ENCODE measurements at regions of chr2 and their contacts with region 1.

Region 1: GRCh38 chr2:113361051-113361450 is 76.4 kb upstream of the ZNG1B start:
- DNase-seq: no peak
- ATAC-seq: no peak
- H3K4me3 Mint-ChIP-seq: no peak overlapping the region
- H3K27ac Mint-ChIP-seq: no peak overlapping the region
- H3K4me1 Mint-ChIP-seq: peaks cover 22% of the 10 kb centered on the region
- H3K27me3 Mint-ChIP-seq: no peaks in the 10 kb centered on the region

Region 2: GRCh38 chr2:113277474-113278072 is 83.5 kb before region 1 on chr2:
- CTCF ChIA-PET with region 1: no interaction called
- POLR2A ChIA-PET with region 1: no interaction called
- intact Hi-C with region 1: no loop called
- DNase-seq: no peak
- ATAC-seq: no peak
- H3K4me3 Mint-ChIP-seq: no peak overlapping the region
- H3K27ac Mint-ChIP-seq: no peak overlapping the region
- H3K4me1 Mint-ChIP-seq: peaks cover 21% of the 10 kb centered on the region
- H3K27me3 Mint-ChIP-seq: peaks cover 54% of the 10 kb centered on the region

Region 3: DNA sequence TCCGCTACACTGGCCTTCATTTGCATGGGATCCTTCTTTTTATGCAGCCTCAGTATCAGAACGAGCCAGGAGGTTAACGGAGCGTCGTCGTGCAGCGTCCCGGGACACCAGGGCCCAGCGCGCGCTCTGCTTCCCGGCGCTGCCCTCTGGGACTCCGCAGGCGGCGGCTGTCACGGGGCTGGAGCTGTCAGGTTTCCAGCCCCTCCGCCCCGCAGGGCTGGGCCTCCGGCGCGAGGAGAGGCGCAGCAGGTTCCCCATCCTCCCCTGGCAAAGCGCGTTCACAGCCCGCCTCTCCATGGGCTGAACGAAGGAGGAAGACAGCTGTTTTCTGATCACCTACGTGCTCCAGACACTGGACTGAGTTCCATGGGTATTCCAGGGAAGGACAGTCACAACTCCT is 69.9 kb before region 1 on chr2:
- CTCF ChIA-PET with region 1: no interaction called
- POLR2A ChIA-PET with region 1: no interaction called
- intact Hi-C with region 1: loop called in 1 of 2 experiments (anchors 10 kb)
- DNase-seq: no peak
- ATAC-seq: no peak
- H3K4me3 Mint-ChIP-seq: no peak overlapping the region
- H3K27ac Mint-ChIP-seq: no peak overlapping the region
- H3K4me1 Mint-ChIP-seq: no peaks in the 10 kb centered on the region
- H3K27me3 Mint-ChIP-seq: peaks cover 14% of the 10 kb centered on the region

Region 4: GRCh38 chr2:113342650-113343049 is 18.4 kb before region 1 on chr2:
- CTCF ChIA-PET with region 1: no interaction called
- POLR2A ChIA-PET with region 1: no interaction called
- intact Hi-C with region 1: no loop called
- DNase-seq: peak; percentile 13
- ATAC-seq: peak; percentile 42
- H3K4me3 Mint-ChIP-seq: no peak overlapping the region
- H3K27ac Mint-ChIP-seq: no peak overlapping the region
- H3K4me1 Mint-ChIP-seq: peaks cover 7% of the 10 kb centered on the region
- H3K27me3 Mint-ChIP-seq: peaks cover 7% of the 10 kb centered on the region